Lower lobe of right lung (tissue), 2 donors: ENCODE measurements at regions of chr3 and their contacts with region 1.

Region 1: GRCh38 chr3:193788189-193788991 is 195.4 kb downstream of the OPA1 start:
- DNase-seq: peak; percentile 63
- ATAC-seq: peak; percentile 87 to 88
- H3K4me3 ChIP-seq: no peak overlapping the region
- H3K27ac ChIP-seq: no peak overlapping the region
- H3K4me1 ChIP-seq: peaks cover 12% of the 10 kb centered on the region
- H3K27me3 ChIP-seq: no peaks in the 10 kb centered on the region
- CTCF ChIP-seq: peak; percentile 81

Region 2: GRCh38 chr3:193928354-193929209 is 140.2 kb after region 1 on chr3:
- intact Hi-C with region 1: no loop called
- DNase-seq: no peak
- ATAC-seq: peak; percentile 19 to 87
- H3K4me3 ChIP-seq: no peak overlapping the region
- H3K27ac ChIP-seq: no peak overlapping the region
- H3K4me1 ChIP-seq: peaks cover 5% of the 10 kb centered on the region
- H3K27me3 ChIP-seq: no peaks in the 10 kb centered on the region
- CTCF ChIP-seq: no peak

Region 3: DNA sequence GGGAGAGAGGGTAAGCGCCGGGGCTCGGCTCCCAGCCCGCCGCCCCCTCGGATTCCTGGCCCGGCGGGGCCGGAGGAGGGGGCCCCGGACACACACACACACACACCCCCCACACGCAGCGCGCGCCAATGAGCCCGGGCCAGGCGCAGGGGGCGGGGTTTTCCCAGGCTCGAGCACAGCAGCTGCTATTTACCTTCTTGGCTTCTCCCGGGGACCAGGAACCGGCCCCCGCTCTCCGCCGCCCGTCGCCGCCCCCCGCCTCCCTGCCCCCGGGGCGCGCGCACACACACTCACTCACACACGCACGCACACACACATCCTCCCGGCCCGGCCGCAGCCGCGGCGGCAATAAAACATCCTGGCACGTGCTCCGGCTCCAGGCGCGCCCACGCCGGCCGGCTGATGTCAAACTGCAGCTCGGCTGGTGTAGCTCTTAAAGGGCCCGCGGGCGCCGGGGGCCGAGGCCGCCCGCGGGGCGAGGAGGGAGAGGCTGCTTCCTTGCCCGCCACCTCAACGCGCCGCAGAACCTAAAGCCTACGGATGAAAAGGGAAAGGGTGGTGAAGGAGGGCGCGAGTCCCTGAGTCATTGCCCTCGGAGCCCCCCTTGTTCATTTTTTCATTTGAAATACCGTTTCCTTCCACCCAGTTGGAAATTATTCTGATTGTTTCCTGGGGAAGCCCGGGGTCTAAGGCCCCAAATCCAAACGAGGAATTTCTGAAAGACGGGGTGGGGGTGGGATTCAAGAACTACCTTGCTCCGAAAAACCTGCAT is 346.6 kb after region 1 on chr3:
- intact Hi-C with region 1: loop called (anchors 10 kb)
- DNase-seq: peak; percentile 94
- ATAC-seq: peak; percentile 81 to 89
- H3K4me3 ChIP-seq: peak overlapping the region; percentile 72
- H3K27ac ChIP-seq: peak overlapping the region; percentile 92
- H3K4me1 ChIP-seq: peaks cover 59% of the 10 kb centered on the region
- H3K27me3 ChIP-seq: peaks cover 4% of the 10 kb centered on the region
- CTCF ChIP-seq: no peak